CD4-positive, alpha-beta memory T cell (primary cell): ENCODE measurements at regions of chr1 and their contacts with region 1.

Region 1: GRCh38 chr1:50704126-50704525 is 255.9 kb downstream of the FAF1 start:
- DNase-seq: peak in 4 of 5 donors; percentile 8 to 21 (median 14)
- H3K4me3 ChIP-seq: no peak overlapping the region
- H3K4me3 Mint-ChIP-seq: no peak overlapping the region
- H3K27ac ChIP-seq: no peak overlapping the region
- H3K27ac Mint-ChIP-seq: no peak overlapping the region
- H3K4me1 ChIP-seq: no peaks in the 10 kb centered on the region
- H3K4me1 Mint-ChIP-seq: peaks cover 0 to 7% (median 2%) of the 10 kb centered on the region in 4 donors
- H3K27me3 ChIP-seq: no peaks in the 10 kb centered on the region
- H3K27me3 Mint-ChIP-seq: no peaks in the 10 kb centered on the region

Region 2: GRCh38 chr1:50368179-50369012 is 335.7 kb before region 1 on chr1:
- CTCF ChIA-PET with region 1: interaction called, 3 read pairs
- POLR2A ChIA-PET with region 1: no interaction called
- intact Hi-C with region 1: loop called (anchors 5 kb)
- DNase-seq: peak in 2 of 5 donors; percentile 6 to 10
- H3K4me3 ChIP-seq: no peak overlapping the region
- H3K4me3 Mint-ChIP-seq: no peak overlapping the region
- H3K27ac ChIP-seq: no peak overlapping the region
- H3K27ac Mint-ChIP-seq: no peak overlapping the region
- H3K4me1 ChIP-seq: no peaks in the 10 kb centered on the region
- H3K4me1 Mint-ChIP-seq: peaks cover 0 to 5% (median 0%) of the 10 kb centered on the region in 4 donors
- H3K27me3 ChIP-seq: no peaks in the 10 kb centered on the region
- H3K27me3 Mint-ChIP-seq: peaks cover 16 to 25% of the 10 kb centered on the region in 2 donors